GM13977 (cell line): ENCODE measurements at regions of chr7 and their contacts with region 1.

Region 1: DNA sequence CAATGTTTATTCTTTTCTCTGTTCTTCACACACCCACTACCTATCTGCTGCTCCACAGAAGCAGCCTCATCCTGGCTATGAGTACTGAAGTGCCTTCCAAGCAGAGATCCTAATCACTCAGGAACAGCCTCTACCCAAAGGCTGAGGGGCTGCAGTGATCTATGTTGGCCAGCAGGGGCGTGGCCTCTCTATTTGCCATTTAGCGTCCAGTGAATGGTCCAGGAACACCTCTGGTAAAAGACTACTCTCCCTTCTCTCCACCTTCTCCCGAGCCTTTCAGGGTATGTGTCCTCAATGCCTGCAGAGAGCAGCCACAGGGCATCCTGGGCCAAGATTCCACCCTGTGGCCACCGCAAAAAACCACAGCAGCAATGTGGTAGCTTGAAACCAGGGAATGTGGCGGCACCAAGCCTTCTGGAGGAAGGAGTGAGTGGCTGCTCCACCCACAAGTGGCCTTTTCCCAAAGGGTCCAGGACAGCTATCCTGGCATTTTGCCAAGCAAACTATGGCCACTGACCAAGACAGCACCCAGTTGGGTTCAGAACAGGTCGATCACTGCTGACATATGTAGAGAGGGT is 70.9 kb downstream of the SYPL1 start:
- DNase-seq: peak; percentile 62
- CTCF ChIP-seq: peak; percentile 66

Region 2: DNA sequence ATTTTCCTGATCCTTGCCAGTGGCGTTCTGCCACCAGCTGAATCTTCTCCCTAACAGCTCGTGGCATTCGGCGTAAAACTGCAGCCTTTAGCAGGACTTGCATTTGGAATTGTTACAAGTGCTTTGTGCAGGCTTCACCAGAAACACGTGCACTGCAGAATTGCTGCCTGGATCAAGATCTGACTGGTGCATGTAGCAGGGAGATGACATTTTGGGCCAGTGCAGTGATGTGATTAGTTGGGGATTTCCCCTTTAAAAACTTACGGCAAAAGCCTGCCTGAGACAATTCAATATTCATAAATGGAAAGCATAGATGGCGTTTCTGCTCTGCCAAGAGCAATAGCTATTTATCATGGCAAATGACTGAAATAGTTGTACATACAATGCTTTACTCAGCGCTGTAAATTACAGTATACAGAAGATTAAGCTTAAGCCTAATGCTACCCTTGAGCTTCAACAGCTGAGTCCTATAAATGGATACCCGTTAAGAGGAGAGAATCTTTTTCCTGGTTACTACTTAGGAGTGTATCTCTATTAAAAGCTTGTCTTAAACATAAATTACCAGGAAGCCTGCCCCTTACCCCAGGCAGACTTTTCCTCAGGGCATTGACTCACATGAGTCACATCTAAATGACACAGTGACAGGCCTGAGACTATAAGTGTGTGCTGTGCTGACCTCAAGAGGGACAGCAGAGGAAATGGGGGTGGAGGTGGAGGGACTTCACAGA is 271.2 kb before region 1 on chr7:
- in situ Hi-C with region 1: loop called (anchors 5 kb)
- DNase-seq: peak; percentile 27
- CTCF ChIP-seq: no peak

Region 3: DNA sequence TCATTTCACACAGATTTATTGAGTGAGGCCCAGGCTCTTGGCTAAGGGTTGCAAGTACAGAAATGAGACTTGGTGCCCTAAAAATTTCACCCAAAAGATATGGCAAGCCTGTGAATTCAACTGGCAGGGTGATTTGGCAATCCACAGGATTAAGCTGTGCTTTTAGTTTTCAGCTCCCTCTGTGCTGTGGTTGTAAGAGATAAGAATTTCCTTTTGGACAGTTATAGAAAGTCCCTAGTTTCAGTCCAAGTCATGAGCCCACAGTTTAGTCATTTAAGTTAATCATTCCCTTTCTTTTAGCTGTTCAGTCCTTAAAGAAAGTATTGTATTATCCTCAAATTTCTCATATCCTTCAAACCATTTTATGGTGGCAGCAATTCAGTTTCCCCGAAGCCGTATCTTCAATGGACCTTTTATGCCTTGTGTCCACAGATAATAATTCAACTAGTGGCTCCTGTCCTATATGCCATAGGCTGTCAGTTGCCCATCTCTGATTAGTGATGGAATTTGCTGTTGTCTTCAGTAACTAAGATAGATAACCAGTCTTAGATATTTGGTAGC is 317.0 kb after region 1 on chr7:
- in situ Hi-C with region 1: no loop called
- DNase-seq: no peak
- CTCF ChIP-seq: no peak